CD4-positive, alpha-beta T cell (primary cell): ENCODE measurements at regions of chr1 and their contacts with region 1.

Region 1: GRCh38 chr1:155063550-155064110 is at the start of gene EFNA4:
- DNase-seq: peak; percentile 69 to 92 (median 80)
- ATAC-seq: peak; percentile 90
- H3K4me3 ChIP-seq: peak within 1 kb of the TSS; percentile 76
- H3K4me3 Mint-ChIP-seq: peak within 1 kb of the TSS; percentile 96
- H3K27ac ChIP-seq: peak within 1 kb of the TSS in 1 of 2 donors; percentile 61
- H3K27ac Mint-ChIP-seq: peak within 1 kb of the TSS; percentile 70
- H3K4me1 ChIP-seq: peaks cover 41% of the 10 kb centered on the region
- H3K4me1 Mint-ChIP-seq: peaks cover 32% of the 10 kb centered on the region
- H3K27me3 ChIP-seq: no peaks in the 10 kb centered on the region
- H3K27me3 Mint-ChIP-seq: no peaks in the 10 kb centered on the region
- CTCF ChIP-seq: no peak
- total RNA-seq, gene EFNA4: 2.4 to 3.3 TPM

Region 2: DNA sequence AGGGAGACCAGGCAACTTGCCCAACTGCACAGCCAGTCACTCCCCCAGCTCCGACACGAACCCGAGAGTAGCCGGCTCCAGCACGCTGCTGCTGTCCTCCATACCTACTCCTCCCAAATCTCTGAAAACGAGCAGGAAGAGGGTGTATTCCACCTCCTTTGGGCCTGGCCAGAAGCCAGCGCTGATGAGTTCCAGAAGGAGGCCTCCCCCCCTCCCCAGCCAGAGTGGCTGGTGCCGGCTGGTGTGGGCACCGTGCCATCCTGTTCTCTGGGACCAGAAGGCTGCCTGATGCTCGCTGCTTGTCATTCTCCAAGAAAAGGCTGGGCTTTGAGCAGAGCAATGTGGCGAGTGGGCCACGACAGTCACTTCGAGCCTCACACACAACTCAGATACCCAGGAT is 215.7 kb before region 1 on chr1:
- CTCF ChIA-PET with region 1: no interaction called
- POLR2A ChIA-PET with region 1: no interaction called
- intact Hi-C with region 1: no loop called
- DNase-seq: no peak
- ATAC-seq: no peak
- H3K4me3 ChIP-seq: no peak overlapping the region
- H3K4me3 Mint-ChIP-seq: no peak overlapping the region
- H3K27ac ChIP-seq: no peak overlapping the region
- H3K27ac Mint-ChIP-seq: no peak overlapping the region
- H3K4me1 ChIP-seq: no peaks in the 10 kb centered on the region
- H3K4me1 Mint-ChIP-seq: no peaks in the 10 kb centered on the region
- H3K27me3 ChIP-seq: no peaks in the 10 kb centered on the region
- H3K27me3 Mint-ChIP-seq: no peaks in the 10 kb centered on the region
- CTCF ChIP-seq: no peak

Region 3: GRCh38 chr1:154961497-154962262 is 102.0 kb before region 1 on chr1 and contains the start of gene PYGO2:
- CTCF ChIA-PET with region 1: interaction called, 11 read pairs
- POLR2A ChIA-PET with region 1: no interaction called
- intact Hi-C with region 1: loop called in 1 of 2 experiments (anchors 5 kb)
- DNase-seq: peak; percentile 65 to 91 (median 77)
- ATAC-seq: peak; percentile 72
- H3K4me3 ChIP-seq: peak within 1 kb of the TSS; percentile 68
- H3K4me3 Mint-ChIP-seq: peak within 1 kb of the TSS; percentile 99
- H3K27ac ChIP-seq: peak within 1 kb of the TSS; percentile 88 to 95
- H3K27ac Mint-ChIP-seq: peak within 1 kb of the TSS; percentile 98
- H3K4me1 ChIP-seq: peaks cover 58% of the 10 kb centered on the region
- H3K4me1 Mint-ChIP-seq: peaks cover 20% of the 10 kb centered on the region
- H3K27me3 ChIP-seq: no peaks in the 10 kb centered on the region
- H3K27me3 Mint-ChIP-seq: no peaks in the 10 kb centered on the region
- CTCF ChIP-seq: peak; percentile 60
- total RNA-seq, gene PYGO2: 30.3 to 32.8 TPM

Region 4: DNA sequence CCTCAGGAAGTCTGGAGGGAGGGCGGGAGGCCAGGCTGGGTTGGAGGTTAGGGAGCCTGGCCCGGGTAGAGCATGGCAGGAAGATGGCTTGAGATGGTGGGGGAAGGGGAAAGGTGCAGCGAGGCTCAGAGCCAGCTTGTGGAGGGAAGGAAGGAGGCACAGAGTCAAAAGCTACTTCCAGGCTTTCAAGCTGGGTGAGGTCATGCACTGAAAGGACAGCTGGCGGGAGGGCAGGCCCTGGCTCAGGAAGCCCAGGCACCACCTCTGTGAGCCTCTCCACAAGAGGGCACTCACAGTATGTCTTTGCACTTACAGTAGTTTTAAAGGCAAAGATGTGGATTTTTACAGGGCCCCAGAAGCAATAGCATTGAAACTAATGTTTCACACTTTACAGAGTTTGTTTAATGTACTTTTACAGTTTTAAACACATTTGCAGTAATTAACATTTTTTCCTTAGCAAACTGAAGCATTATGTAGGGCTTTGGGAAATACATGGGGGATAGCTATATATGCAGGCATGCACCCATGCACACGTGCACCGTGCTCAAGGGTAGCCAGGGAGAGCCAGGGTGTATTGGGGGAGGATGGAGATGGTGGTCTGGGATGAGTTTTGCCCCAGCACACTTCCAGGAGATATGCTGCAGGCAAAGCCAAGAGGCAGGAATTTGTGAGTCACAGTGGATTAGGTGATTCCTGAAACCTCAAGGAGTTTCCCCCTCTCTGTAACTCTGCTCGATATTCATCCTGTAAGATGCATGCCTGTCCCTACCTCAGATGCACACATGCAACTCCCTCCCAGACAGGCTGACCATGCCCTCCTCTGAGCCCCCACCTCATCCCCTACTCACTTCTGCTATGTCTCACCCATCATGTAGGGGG is 18.6 kb before region 1 on chr1:
- CTCF ChIA-PET with region 1: interaction called, 38 read pairs
- POLR2A ChIA-PET with region 1: interaction called, 4 read pairs
- intact Hi-C with region 1: loop called (anchors 1 kb)
- DNase-seq: peak; percentile 42 to 85 (median 52)
- ATAC-seq: peak; percentile 93
- H3K4me3 ChIP-seq: no peak overlapping the region
- H3K4me3 Mint-ChIP-seq: no peak overlapping the region
- H3K27ac ChIP-seq: no peak overlapping the region
- H3K27ac Mint-ChIP-seq: no peak overlapping the region
- H3K4me1 ChIP-seq: peaks cover 7% of the 10 kb centered on the region
- H3K4me1 Mint-ChIP-seq: peaks cover 9% of the 10 kb centered on the region
- H3K27me3 ChIP-seq: no peaks in the 10 kb centered on the region
- H3K27me3 Mint-ChIP-seq: no peaks in the 10 kb centered on the region
- CTCF ChIP-seq: peak; percentile 72

Region 5: GRCh38 chr1:155050560-155051341 is 12.9 kb before region 1 on chr1 and contains the start of gene ADAM15:
- CTCF ChIA-PET with region 1: interaction called, 38 read pairs
- POLR2A ChIA-PET with region 1: interaction called, 10 read pairs
- intact Hi-C with region 1: loop called (anchors 1 kb)
- DNase-seq: peak; percentile 63 to 91 (median 74)
- ATAC-seq: peak; percentile 81
- H3K4me3 ChIP-seq: peak within 1 kb of the TSS; percentile 87
- H3K4me3 Mint-ChIP-seq: peak within 1 kb of the TSS; percentile 91
- H3K27ac ChIP-seq: peak within 1 kb of the TSS; percentile 55 to 61
- H3K27ac Mint-ChIP-seq: peak within 1 kb of the TSS; percentile 55
- H3K4me1 ChIP-seq: peaks cover 33% of the 10 kb centered on the region
- H3K4me1 Mint-ChIP-seq: peaks cover 26% of the 10 kb centered on the region
- H3K27me3 ChIP-seq: no peaks in the 10 kb centered on the region
- H3K27me3 Mint-ChIP-seq: no peaks in the 10 kb centered on the region
- CTCF ChIP-seq: peak; percentile 95
- total RNA-seq, gene ADAM15: 17.2 to 20.1 TPM

Region 6: DNA sequence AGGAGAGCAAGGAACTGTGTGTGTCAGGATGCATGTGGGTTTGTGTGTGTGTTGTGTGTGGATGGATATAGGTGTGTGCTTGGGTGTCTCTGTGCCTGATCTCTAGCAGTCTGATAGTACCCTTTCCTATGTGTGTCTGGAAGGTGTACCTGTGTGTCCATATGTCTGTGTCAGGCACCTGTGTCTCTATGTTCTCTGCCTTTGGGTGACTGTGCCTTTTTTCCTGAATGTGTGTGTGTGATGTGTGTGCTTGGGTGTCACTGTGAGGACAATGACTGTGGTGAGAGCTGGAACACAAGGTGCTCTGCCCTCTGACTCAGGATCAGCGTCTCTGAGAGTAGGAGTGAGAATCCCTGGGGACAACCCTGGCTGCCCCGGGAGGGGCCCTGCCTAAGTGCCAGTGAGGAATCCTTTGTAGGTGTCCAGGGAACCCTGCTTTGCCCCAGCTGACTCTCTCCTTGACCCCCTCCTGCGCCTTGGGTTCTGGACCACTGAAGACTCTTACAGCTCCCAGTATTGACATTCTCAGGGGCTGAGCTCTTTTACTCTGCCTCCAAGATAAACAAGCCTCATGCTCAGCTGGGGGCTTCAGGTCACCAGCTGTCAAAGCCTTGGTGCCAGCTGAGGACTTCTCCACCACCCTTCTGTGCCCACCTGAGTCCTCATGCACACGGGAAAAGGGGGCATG is 14.3 kb after region 1 on chr1:
- CTCF ChIA-PET with region 1: interaction called, 8 read pairs
- POLR2A ChIA-PET with region 1: interaction called, 4 read pairs
- intact Hi-C with region 1: loop called in 1 of 2 experiments (anchors 1 kb)
- DNase-seq: peak in 1 of 14 experiments; percentile 14
- ATAC-seq: no peak
- H3K4me3 ChIP-seq: no peak overlapping the region
- H3K4me3 Mint-ChIP-seq: peak overlapping the region; percentile 58
- H3K27ac ChIP-seq: no peak overlapping the region
- H3K27ac Mint-ChIP-seq: peak overlapping the region; percentile 5
- H3K4me1 ChIP-seq: peaks cover 59% of the 10 kb centered on the region
- H3K4me1 Mint-ChIP-seq: peaks cover 55% of the 10 kb centered on the region
- H3K27me3 ChIP-seq: peaks cover 31% of the 10 kb centered on the region in 2 experiments
- H3K27me3 Mint-ChIP-seq: peaks cover 25% of the 10 kb centered on the region
- CTCF ChIP-seq: no peak

Region 7: GRCh38 chr1:155105604-155106022 is 42.0 kb after region 1 on chr1:
- CTCF ChIA-PET with region 1: no interaction called
- POLR2A ChIA-PET with region 1: no interaction called
- intact Hi-C with region 1: no loop called
- DNase-seq: no peak
- ATAC-seq: no peak
- H3K4me3 ChIP-seq: no peak overlapping the region
- H3K4me3 Mint-ChIP-seq: no peak overlapping the region
- H3K27ac ChIP-seq: no peak overlapping the region
- H3K27ac Mint-ChIP-seq: no peak overlapping the region
- H3K4me1 ChIP-seq: no peaks in the 10 kb centered on the region
- H3K4me1 Mint-ChIP-seq: no peaks in the 10 kb centered on the region
- H3K27me3 ChIP-seq: peaks cover 0 to 3% of the 10 kb centered on the region in 2 experiments
- H3K27me3 Mint-ChIP-seq: peaks cover 4% of the 10 kb centered on the region
- CTCF ChIP-seq: no peak